ENCODE measurements at regions of chr4 and their contacts with region 1.

Region 1: DNA sequence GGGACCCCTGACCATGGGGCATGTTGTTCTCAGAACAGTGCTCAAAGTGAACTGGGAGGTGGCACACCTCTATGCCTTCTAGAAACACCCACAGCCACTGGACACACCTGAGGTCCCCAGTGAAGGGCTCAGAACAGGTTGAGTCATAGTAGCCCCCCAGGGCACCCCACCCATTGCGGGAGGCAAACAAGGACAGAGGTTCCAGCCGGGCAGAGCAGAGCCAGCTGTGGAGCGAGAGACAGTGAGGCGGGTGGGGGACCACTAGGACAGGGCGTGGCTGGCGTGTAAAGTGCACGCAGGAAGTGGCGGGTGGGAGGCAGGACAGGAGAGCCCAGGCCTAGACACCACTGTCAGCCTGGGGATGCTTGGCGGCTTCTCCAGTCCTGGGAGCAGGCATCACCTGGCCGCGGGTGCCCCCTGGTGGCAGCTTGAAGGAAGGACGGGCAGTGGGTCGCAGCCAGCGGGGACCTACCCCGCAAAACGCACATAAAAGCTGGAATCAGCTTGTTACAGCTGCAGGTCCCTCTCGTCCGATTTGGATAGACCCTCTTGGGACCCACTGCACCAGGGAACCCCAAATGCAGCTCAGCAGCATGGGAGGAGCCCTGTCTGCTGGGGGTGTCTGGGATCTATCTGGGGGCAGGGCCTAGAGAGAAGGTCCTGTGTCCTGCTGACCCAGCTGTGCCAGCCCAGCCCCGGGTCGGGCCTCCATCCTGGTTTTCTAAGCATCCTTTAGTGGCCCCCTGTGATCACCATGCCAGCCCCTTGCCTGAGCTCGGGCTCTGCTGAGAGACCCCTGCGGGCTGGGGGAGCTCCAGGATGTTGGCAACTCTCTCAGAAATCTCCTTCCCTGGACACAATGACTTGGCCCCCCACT is 57.6 kb downstream of the WFS1 start:
- DNase-seq: peak; percentile 89
- ATAC-seq: peak; percentile 79
- H3K4me3 Mint-ChIP-seq: no peak overlapping the region
- H3K27ac Mint-ChIP-seq: no peak overlapping the region
- H3K4me1 Mint-ChIP-seq: 0 out of 2 replicates have a peak, but pooled peaks cover 3% of the 10 kb centered on the region
- H3K27me3 Mint-ChIP-seq: no peaks in the 10 kb centered on the region
- CTCF ChIP-seq: peak; percentile 95

Region 2: DNA sequence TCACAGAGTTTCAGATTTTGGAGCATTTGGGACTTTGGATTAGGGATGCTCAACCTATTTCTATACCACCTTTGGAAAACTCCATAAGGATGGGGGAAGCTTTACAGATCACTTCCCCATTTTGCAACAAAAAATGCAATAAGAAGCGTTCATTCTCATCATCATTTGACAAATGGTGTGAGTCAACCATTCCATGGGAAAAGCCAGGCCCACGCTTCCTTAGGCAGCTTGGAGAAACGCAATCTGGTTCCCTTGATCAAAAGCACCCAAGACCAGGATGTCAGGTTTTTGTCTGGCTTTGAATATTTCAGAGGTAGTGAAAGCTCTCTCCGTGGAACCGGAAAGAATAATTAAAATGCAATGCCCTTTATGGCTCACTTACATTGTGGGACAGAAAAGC is 229.7 kb before region 1 on chr4:
- CTCF ChIA-PET with region 1: no interaction called
- POLR2A ChIA-PET with region 1: no interaction called
- DNase-seq: no peak
- ATAC-seq: no peak
- H3K4me3 Mint-ChIP-seq: no peak overlapping the region
- H3K27ac Mint-ChIP-seq: no peak overlapping the region
- H3K4me1 Mint-ChIP-seq: peaks cover 17% of the 10 kb centered on the region
- H3K27me3 Mint-ChIP-seq: no peaks in the 10 kb centered on the region
- CTCF ChIP-seq: no peak

Region 3: DNA sequence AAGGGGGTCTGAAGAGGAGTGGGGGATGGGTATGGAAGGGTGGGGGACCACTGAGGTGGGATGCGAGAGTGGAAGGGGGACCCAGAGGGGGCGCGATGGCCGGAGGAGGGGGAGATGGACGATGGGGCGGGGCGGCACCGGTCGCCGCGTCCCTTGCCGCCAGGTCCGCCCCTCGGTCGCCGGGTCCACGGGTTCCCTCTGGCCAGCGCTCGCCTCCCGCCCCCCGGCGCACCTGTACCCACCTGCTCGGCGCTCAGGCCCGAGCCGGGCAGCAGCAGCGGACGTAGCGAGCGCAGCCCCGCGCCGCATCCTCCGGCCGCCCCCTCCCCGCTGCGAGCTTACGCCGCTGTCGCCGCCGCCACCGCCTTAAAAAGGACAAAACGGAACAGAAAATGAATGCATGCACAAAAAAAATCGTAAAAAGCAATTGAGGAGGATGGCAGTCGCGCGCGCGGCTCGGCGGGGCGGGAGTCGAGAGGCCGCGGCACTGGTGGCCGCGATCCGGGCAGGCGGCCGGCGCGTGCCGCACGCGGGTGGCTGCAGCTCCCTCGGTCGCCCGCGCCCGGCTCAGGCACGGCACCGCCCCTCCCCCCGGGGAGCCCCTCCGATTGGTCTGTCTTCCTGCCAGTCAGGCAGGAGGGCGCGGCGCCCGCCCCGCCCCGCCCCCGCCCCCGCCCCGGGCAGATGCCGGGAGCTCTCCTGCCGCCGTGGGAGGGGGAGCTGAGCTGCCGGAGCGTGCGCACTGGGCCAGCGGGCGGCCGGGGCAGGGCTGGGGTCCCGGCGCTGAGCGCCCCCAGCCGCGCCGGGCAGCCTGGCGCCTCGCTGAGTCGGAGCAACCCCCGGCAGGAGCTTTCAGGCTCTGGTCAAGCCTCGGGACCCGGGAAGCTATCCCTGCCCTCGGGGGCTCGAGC is 127.0 kb before region 1 on chr4 and contains the start of gene JAKMIP1:
- CTCF ChIA-PET with region 1: interaction called, 20 read pairs
- POLR2A ChIA-PET with region 1: no interaction called
- DNase-seq: peak; percentile 93
- ATAC-seq: peak; percentile 50
- H3K4me3 Mint-ChIP-seq: peak within 1 kb of the TSS; percentile 67
- H3K27ac Mint-ChIP-seq: no peak within 1 kb of the TSS
- H3K4me1 Mint-ChIP-seq: peaks cover 37% of the 10 kb centered on the region
- H3K27me3 Mint-ChIP-seq: peaks cover 41% of the 10 kb centered on the region
- CTCF ChIP-seq: no peak
- total RNA-seq, gene JAKMIP1: 4.0 to 5.6 TPM (median 5.4 TPM) in 3 replicates

Region 4: GRCh38 chr4:6343950-6344408 is 16.7 kb after region 1 on chr4:
- CTCF ChIA-PET with region 1: interaction called, 32 read pairs
- POLR2A ChIA-PET with region 1: no interaction called
- DNase-seq: no peak
- ATAC-seq: peak; percentile 65
- H3K4me3 Mint-ChIP-seq: no peak overlapping the region
- H3K27ac Mint-ChIP-seq: no peak overlapping the region
- H3K4me1 Mint-ChIP-seq: 0 out of 2 replicates have a peak, but pooled peaks cover 7% of the 10 kb centered on the region
- H3K27me3 Mint-ChIP-seq: no peaks in the 10 kb centered on the region
- CTCF ChIP-seq: no peak

Region 5: GRCh38 chr4:6369924-6370645 is 42.8 kb after region 1 on chr4:
- CTCF ChIA-PET with region 1: interaction called, 12 read pairs
- POLR2A ChIA-PET with region 1: no interaction called
- DNase-seq: peak; percentile 66
- ATAC-seq: peak; percentile 74
- H3K4me3 Mint-ChIP-seq: no peak overlapping the region
- H3K27ac Mint-ChIP-seq: no peak overlapping the region
- H3K4me1 Mint-ChIP-seq: peaks cover 18% of the 10 kb centered on the region
- H3K27me3 Mint-ChIP-seq: no peaks in the 10 kb centered on the region
- CTCF ChIP-seq: no peak

Region 6: GRCh38 chr4:6427439-6428090 is 100.3 kb after region 1 on chr4:
- CTCF ChIA-PET with region 1: interaction called, 10 read pairs
- POLR2A ChIA-PET with region 1: no interaction called
- DNase-seq: no peak
- ATAC-seq: peak; percentile 74
- H3K4me3 Mint-ChIP-seq: no peak overlapping the region
- H3K27ac Mint-ChIP-seq: no peak overlapping the region
- H3K4me1 Mint-ChIP-seq: no peaks in the 10 kb centered on the region
- H3K27me3 Mint-ChIP-seq: no peaks in the 10 kb centered on the region
- CTCF ChIP-seq: no peak

Region 7: DNA sequence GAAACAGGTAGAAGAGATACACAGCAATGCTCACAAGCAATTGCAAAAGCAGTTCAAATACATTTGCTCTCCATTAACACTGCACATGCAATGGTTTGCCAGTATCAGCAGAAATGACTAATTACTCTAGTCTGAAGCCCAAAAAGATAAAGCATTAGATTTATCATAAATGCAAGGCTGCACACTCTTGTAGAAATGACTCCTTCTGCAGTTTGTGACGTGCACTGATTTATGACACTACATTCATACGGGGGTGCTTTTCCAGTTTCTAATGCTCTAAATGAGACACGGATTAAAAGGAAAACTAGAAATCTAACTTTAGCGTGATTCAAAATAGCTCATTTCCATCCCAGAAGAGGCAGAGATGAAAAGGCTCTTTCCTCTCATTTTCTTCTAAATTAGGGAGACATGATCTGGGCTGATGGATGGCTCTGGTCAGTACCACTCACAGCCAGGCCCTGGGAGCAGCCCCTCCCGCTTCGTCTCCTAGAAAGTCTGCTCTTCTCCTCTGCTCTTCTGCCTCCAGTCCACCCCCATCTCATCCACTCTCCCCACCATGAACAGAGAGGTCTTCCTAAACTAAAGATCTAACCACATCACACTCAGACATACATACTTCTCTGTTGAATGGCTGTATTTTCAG is 112.0 kb after region 1 on chr4:
- CTCF ChIA-PET with region 1: no interaction called
- POLR2A ChIA-PET with region 1: no interaction called
- DNase-seq: no peak
- ATAC-seq: no peak
- H3K4me3 Mint-ChIP-seq: no peak overlapping the region
- H3K27ac Mint-ChIP-seq: no peak overlapping the region
- H3K4me1 Mint-ChIP-seq: 0 out of 2 replicates have a peak, but pooled peaks cover 3% of the 10 kb centered on the region
- H3K27me3 Mint-ChIP-seq: peaks cover 4% of the 10 kb centered on the region
- CTCF ChIP-seq: no peak

Measured in WTC11 (cell line).